ENCODE measurements at regions of chr15 and their contacts with region 1.

Region 1: GRCh38 chr15:43440721-43441281 is 52.2 kb downstream of the TP53BP1 start:
- DNase-seq: peak; percentile 49 to 87 (median 68)
- ATAC-seq: peak; percentile 99
- H3K4me3 ChIP-seq: no peak overlapping the region
- H3K27ac ChIP-seq: peak overlapping the region; percentile 51
- H3K4me1 ChIP-seq: peaks cover 3% of the 10 kb centered on the region in 2 experiments; a peak in 2 of 5 replicates
- H3K27me3 ChIP-seq: no peaks in the 10 kb centered on the region
- CTCF ChIP-seq: peak; percentile 67 to 87 (median 72)
- EP300 ChIP-seq: peak; percentile 79
- POLR2A ChIP-seq: no peak
- RAD21 ChIP-seq: peak; percentile 91 to 93

Region 2: DNA sequence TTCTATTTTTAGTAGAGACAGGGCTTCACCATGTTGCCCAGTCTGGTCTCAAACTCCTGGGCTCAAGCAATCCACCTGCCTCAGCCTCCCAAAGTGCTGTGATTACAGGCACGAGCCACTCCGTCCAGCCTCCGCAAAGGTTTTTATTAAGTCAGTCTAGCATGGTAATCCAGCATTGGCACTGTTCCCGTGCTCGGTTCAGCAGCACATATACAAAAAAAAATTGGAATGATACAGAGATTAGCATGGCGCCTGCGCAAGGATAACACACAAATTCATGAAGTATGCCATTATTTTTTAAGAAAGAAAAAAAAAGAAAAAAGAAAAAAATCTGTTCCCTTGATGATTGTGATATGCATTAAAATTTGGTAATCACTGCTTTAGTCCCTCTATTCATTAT is 261.4 kb after region 1 on chr15:
- CTCF ChIA-PET with region 1: no interaction called
- POLR2A ChIA-PET with region 1: no interaction called
- in situ Hi-C with region 1: loop called (anchors 25 kb)
- intact Hi-C with region 1: no loop called
- DNase-seq: no peak
- ATAC-seq: no peak
- H3K4me3 ChIP-seq: no peak overlapping the region
- H3K27ac ChIP-seq: no peak overlapping the region
- H3K4me1 ChIP-seq: no peaks in the 10 kb centered on the region
- H3K27me3 ChIP-seq: peaks cover 2 to 4% of the 10 kb centered on the region in 2 experiments; a peak in 2 of 5 replicates
- CTCF ChIP-seq: no peak
- EP300 ChIP-seq: no peak
- POLR2A ChIP-seq: no peak
- RAD21 ChIP-seq: no peak

Region 3: GRCh38 chr15:43769584-43770228 is 328.9 kb after region 1 on chr15:
- CTCF ChIA-PET with region 1: no interaction called
- POLR2A ChIA-PET with region 1: interaction called, 3 read pairs
- in situ Hi-C with region 1: no loop called
- intact Hi-C with region 1: loop called (anchors 5 kb)
- DNase-seq: peak; percentile 56 to 77 (median 62)
- ATAC-seq: peak; percentile 86
- H3K4me3 ChIP-seq: no peak overlapping the region
- H3K27ac ChIP-seq: no peak overlapping the region
- H3K4me1 ChIP-seq: peaks cover 0 to 2% of the 10 kb centered on the region in 2 experiments; a peak in 2 of 5 replicates
- H3K27me3 ChIP-seq: no peaks in the 10 kb centered on the region
- CTCF ChIP-seq: peak; percentile 57 to 86 (median 77)
- EP300 ChIP-seq: no peak
- POLR2A ChIP-seq: no peak
- RAD21 ChIP-seq: peak in 1 of 2 experiments; percentile 53; a peak in 2 of 4 replicates